Sigmoid colon (tissue), 7 donors: ENCODE measurements at regions of chrX and their contacts with region 1.

Region 1: GRCh38 chrX:70096052-70096451 is 33.8 kb downstream of the OTUD6A start:
- DNase-seq: no peak
- H3K4me3 ChIP-seq: no peak overlapping the region
- H3K27ac ChIP-seq: no peak overlapping the region
- H3K4me1 ChIP-seq: no peaks in the 10 kb centered on the region
- H3K27me3 ChIP-seq: no peaks in the 10 kb centered on the region
- CTCF ChIP-seq: no peak
- EP300 ChIP-seq: no peak
- POLR2A ChIP-seq: no peak

Region 2: GRCh38 chrX:69493193-69493592 is 602.9 kb before region 1 on chrX:
- intact Hi-C with region 1: loop called (anchors 5 kb)
- DNase-seq: no peak
- H3K4me3 ChIP-seq: no peak overlapping the region
- H3K27ac ChIP-seq: no peak overlapping the region
- H3K4me1 ChIP-seq: no peaks in the 10 kb centered on the region
- H3K27me3 ChIP-seq: no peaks in the 10 kb centered on the region
- CTCF ChIP-seq: peak in 2 of 4 experiments; percentile 18 to 23
- EP300 ChIP-seq: no peak
- POLR2A ChIP-seq: no peak

Region 3: DNA sequence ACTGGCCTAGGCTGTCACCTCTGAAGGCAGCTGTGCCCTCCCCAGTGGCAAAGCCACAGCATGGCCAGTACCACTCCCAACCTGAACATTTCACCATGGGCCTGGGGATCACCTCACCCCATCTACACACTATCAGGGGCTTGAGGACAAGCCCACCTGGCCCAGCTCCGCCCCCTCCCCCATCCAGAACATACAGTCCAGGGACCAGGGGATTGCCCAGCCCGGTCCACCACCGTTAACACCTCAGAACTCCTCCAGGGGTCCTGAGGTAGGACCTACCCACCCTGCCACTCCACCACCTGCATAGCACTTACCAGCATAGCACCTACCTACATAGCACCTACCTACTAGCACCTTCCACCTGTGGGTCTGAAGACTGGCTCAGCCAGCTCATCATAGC is 300.4 kb before region 1 on chrX:
- intact Hi-C with region 1: no loop called
- DNase-seq: no peak
- H3K4me3 ChIP-seq: no peak overlapping the region
- H3K27ac ChIP-seq: no peak overlapping the region
- H3K4me1 ChIP-seq: no peaks in the 10 kb centered on the region
- H3K27me3 ChIP-seq: no peaks in the 10 kb centered on the region
- CTCF ChIP-seq: no peak
- EP300 ChIP-seq: no peak
- POLR2A ChIP-seq: no peak

Region 4: DNA sequence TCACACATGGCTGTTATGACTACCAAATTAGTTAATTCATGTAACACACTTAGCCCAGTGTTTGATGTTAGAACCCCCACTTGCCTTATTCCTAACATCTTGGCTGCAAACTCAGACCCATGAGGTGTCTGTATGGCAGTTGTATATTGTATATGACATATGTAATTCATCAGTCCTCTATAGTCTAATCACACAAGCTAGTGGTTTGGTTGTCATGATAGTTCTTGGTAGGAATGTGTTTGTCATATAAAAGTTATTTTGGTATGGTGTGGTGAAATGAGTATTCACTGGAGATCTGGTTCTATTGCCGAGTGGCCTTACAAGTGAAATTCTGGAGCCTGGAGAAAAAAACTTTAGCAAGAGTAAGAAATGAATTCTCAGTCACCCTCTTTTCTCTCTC is 195.6 kb before region 1 on chrX:
- intact Hi-C with region 1: no loop called
- DNase-seq: no peak
- H3K4me3 ChIP-seq: no peak overlapping the region
- H3K27ac ChIP-seq: no peak overlapping the region
- H3K4me1 ChIP-seq: no peaks in the 10 kb centered on the region
- H3K27me3 ChIP-seq: no peaks in the 10 kb centered on the region
- CTCF ChIP-seq: no peak
- EP300 ChIP-seq: no peak
- POLR2A ChIP-seq: no peak

Region 5: DNA sequence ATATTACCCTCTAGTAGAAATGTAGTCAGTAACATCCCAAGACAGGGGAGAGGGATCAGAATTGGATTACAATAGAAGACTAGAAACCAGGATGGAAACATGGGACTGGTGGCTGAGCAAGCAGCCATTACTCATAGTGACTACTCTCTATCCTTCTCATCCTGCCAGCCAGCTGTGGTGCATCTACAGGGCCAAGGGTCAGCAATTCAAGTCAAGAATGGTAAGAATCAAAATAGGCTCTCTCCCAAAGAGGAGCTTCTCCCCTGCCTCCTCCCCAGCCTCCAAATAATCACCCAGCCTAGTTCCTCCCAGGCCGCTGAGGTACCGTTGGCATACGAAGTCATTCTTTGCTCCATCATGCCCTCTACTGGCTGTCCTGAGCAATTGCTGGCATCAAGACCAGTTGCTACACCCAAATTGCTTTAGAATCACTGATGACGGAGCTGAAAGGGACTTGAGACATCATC is 65.7 kb before region 1 on chrX:
- intact Hi-C with region 1: loop called (anchors 10 kb)
- DNase-seq: no peak
- H3K4me3 ChIP-seq: no peak overlapping the region
- H3K27ac ChIP-seq: no peak overlapping the region
- H3K4me1 ChIP-seq: no peaks in the 10 kb centered on the region
- H3K27me3 ChIP-seq: no peaks in the 10 kb centered on the region
- CTCF ChIP-seq: peak in 3 of 4 experiments; percentile 41 to 52 (median 43)
- EP300 ChIP-seq: no peak
- POLR2A ChIP-seq: no peak